Naive thymus-derived CD4-positive, alpha-beta T cell (primary cell): ENCODE measurements at regions of chr7 and their contacts with region 1.

Region 1: GRCh38 chr7:157875230-157876179 is 538.7 kb downstream of the DNAJB6 start:
- DNase-seq: peak; percentile 43 to 76 (median 72)
- ATAC-seq: peak; percentile 87
- H3K4me3 ChIP-seq: peak overlapping the region; percentile 33
- H3K4me3 Mint-ChIP-seq: peak overlapping the region; percentile 69 to 92 (median 81)
- H3K27ac ChIP-seq: peak overlapping the region; percentile 49
- H3K27ac Mint-ChIP-seq: peak overlapping the region; percentile 20 to 91 (median 73)
- H3K4me1 ChIP-seq: peaks cover 0 to 34% of the 10 kb centered on the region in 2 donors
- H3K4me1 Mint-ChIP-seq: peaks cover 14 to 47% (median 41%) of the 10 kb centered on the region in 7 donors
- H3K27me3 ChIP-seq: no peaks in the 10 kb centered on the region
- H3K27me3 Mint-ChIP-seq: peaks cover 0 to 3% (median 0%) of the 10 kb centered on the region in 5 donors

Region 2: GRCh38 chr7:157397731-157398691 is 477.5 kb before region 1 on chr7:
- CTCF ChIA-PET with region 1: no interaction called
- POLR2A ChIA-PET with region 1: no interaction called
- intact Hi-C with region 1: loop called in 1 of 2 experiments (anchors 1 kb)
- DNase-seq: peak in 2 of 9 donors; percentile 26 to 32
- ATAC-seq: peak; percentile 50
- H3K4me3 ChIP-seq: no peak overlapping the region
- H3K4me3 Mint-ChIP-seq: no peak overlapping the region
- H3K27ac ChIP-seq: no peak overlapping the region
- H3K27ac Mint-ChIP-seq: peak overlapping the region in 6 of 9 donors; percentile 9 to 73 (median 45)
- H3K4me1 ChIP-seq: no peaks in the 10 kb centered on the region
- H3K4me1 Mint-ChIP-seq: peaks cover 15 to 31% (median 20%) of the 10 kb centered on the region in 7 donors
- H3K27me3 ChIP-seq: no peaks in the 10 kb centered on the region
- H3K27me3 Mint-ChIP-seq: no peaks in the 10 kb centered on the region

Region 3: GRCh38 chr7:157490457-157490912 is 385.0 kb before region 1 on chr7:
- CTCF ChIA-PET with region 1: no interaction called
- POLR2A ChIA-PET with region 1: no interaction called
- intact Hi-C with region 1: loop called in 1 of 2 experiments (anchors 1 kb)
- DNase-seq: peak in 8 of 9 donors; percentile 48 to 83 (median 79)
- ATAC-seq: peak; percentile 96
- H3K4me3 ChIP-seq: no peak overlapping the region
- H3K4me3 Mint-ChIP-seq: peak overlapping the region; percentile 23 to 76 (median 51)
- H3K27ac ChIP-seq: no peak overlapping the region
- H3K27ac Mint-ChIP-seq: peak overlapping the region; percentile 12 to 90 (median 63)
- H3K4me1 ChIP-seq: peaks cover 18 to 21% of the 10 kb centered on the region in 2 donors
- H3K4me1 Mint-ChIP-seq: peaks cover 20 to 55% (median 41%) of the 10 kb centered on the region in 7 donors
- H3K27me3 ChIP-seq: no peaks in the 10 kb centered on the region
- H3K27me3 Mint-ChIP-seq: peaks cover 0 to 33% (median 10%) of the 10 kb centered on the region in 5 donors

Region 4: GRCh38 chr7:157625973-157626742 is 249.3 kb before region 1 on chr7:
- CTCF ChIA-PET with region 1: no interaction called
- POLR2A ChIA-PET with region 1: interaction called, 5 read pairs
- intact Hi-C with region 1: loop called in 1 of 2 experiments (anchors 1 kb)
- DNase-seq: peak in 7 of 9 donors; percentile 54 to 83 (median 80)
- ATAC-seq: peak; percentile 79
- H3K4me3 ChIP-seq: peak overlapping the region; percentile 18
- H3K4me3 Mint-ChIP-seq: peak overlapping the region; percentile 69 to 84 (median 76)
- H3K27ac ChIP-seq: no peak overlapping the region
- H3K27ac Mint-ChIP-seq: peak overlapping the region; percentile 28 to 96 (median 89)
- H3K4me1 ChIP-seq: peaks cover 15 to 71% of the 10 kb centered on the region in 2 donors
- H3K4me1 Mint-ChIP-seq: peaks cover 41 to 81% (median 77%) of the 10 kb centered on the region in 7 donors
- H3K27me3 ChIP-seq: no peaks in the 10 kb centered on the region
- H3K27me3 Mint-ChIP-seq: peaks cover 0 to 48% (median 4%) of the 10 kb centered on the region in 5 donors

Region 5: DNA sequence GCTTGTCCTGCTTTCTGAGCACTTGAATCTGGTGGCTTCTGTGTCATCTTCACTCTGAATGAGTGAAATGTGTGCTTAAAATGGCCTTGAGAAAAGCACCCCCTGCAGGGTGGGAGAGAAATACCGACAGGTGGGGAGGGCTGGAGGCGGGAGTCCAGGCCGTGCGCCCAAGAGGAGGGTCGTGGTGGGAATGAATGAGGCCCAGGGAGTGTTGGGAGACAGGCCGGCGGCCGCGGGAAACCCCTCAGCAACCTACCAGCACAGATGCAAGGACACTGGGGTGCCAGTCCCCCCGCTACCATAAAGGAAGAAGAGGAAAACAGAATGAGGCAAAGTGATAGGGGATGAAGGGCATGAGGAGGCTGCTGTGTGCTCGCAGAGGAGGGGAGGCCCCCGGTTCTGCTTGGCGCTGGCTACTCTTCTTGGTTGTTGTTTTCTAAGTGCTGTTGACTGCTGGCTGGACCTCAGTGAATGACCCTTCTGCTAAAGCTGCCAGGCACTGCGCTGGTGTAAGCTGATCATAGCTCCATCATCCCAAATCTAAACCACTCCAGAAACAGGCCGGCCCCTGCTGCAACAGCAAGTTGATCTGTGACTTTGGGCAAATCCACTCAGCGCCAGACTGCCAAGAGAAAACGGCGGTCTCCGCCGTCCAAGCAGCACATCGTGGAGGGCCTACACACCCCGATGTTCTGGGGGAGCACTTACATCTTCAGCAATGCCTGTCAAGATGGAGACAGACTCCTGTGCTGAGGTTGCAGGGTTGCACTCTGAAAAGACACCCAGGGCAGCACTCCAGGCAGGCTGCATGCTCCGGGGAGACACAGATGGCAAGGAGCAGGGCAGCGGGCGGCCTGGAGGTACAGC is 160.2 kb before region 1 on chr7:
- CTCF ChIA-PET with region 1: interaction called, 3 read pairs
- POLR2A ChIA-PET with region 1: no interaction called
- intact Hi-C with region 1: loop called in 1 of 2 experiments (anchors 5 kb)
- DNase-seq: peak in 2 of 9 donors; percentile 30
- ATAC-seq: no peak
- H3K4me3 ChIP-seq: no peak overlapping the region
- H3K4me3 Mint-ChIP-seq: no peak overlapping the region
- H3K27ac ChIP-seq: no peak overlapping the region
- H3K27ac Mint-ChIP-seq: peak overlapping the region in 2 of 9 donors; percentile 17 to 58
- H3K4me1 ChIP-seq: no peaks in the 10 kb centered on the region
- H3K4me1 Mint-ChIP-seq: no peaks in the 10 kb centered on the region
- H3K27me3 ChIP-seq: no peaks in the 10 kb centered on the region
- H3K27me3 Mint-ChIP-seq: peaks cover 0 to 8% (median 0%) of the 10 kb centered on the region in 5 donors

Region 6: DNA sequence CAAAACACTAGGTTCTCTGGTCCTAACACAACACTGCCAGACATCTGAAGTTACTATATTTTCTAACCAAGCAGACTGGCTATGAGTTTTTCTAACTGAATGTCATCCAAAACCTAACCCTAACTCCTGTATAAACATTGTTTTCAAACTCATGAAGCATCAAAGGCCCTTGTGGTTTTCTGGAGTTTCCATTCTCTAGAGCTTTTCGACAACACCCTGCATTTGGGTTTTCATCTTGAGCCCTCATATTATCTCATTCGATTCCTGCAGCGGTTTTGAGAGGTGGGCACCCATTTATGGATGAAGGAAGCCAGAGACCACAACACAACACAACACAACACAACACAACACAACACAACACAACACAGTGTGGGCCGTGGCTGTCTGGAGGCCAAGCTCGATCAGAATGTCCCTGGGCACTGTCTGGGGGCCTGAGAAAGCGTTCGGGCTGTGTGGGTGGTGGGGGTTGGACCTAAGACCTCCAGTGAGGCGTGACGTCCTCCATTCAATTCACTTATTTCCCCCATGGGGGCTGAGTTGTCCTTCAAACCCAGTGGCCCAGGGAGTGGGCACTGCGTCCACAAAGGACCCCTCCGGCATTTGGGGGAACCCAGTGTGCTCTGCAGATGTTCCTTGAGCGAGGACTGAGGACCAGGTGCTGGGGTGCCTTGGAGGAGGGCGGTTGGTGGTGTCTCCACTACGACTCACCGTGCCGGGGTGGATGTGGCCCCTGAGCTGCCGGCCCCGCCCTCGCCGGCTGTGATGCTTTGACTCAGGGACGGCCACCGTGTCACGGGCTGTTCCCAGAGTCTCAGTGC is 48.3 kb before region 1 on chr7:
- CTCF ChIA-PET with region 1: interaction called, 3 read pairs
- POLR2A ChIA-PET with region 1: interaction called, 6 read pairs
- intact Hi-C with region 1: loop called in 1 of 2 experiments (anchors 1 kb)
- DNase-seq: peak in 7 of 9 donors; percentile 53 to 79 (median 67)
- ATAC-seq: peak; percentile 74
- H3K4me3 ChIP-seq: peak overlapping the region; percentile 37
- H3K4me3 Mint-ChIP-seq: peak overlapping the region; percentile 45 to 83 (median 78)
- H3K27ac ChIP-seq: peak overlapping the region; percentile 40
- H3K27ac Mint-ChIP-seq: peak overlapping the region; percentile 66 to 96 (median 89)
- H3K4me1 ChIP-seq: peaks cover 0 to 47% of the 10 kb centered on the region in 2 donors
- H3K4me1 Mint-ChIP-seq: peaks cover 9 to 58% (median 45%) of the 10 kb centered on the region in 7 donors
- H3K27me3 ChIP-seq: no peaks in the 10 kb centered on the region
- H3K27me3 Mint-ChIP-seq: no peaks in the 10 kb centered on the region

Region 7: GRCh38 chr7:158976849-158977593 is 1101.5 kb after region 1 on chr7:
- CTCF ChIA-PET with region 1: no interaction called
- POLR2A ChIA-PET with region 1: no interaction called
- intact Hi-C with region 1: loop called in 1 of 2 experiments (anchors 10 kb)
- DNase-seq: peak; percentile 77 to 94 (median 85)
- ATAC-seq: peak; percentile 93
- H3K4me3 ChIP-seq: peak overlapping the region; percentile 55
- H3K4me3 Mint-ChIP-seq: peak overlapping the region; percentile 74 to 94 (median 88)
- H3K27ac ChIP-seq: peak overlapping the region; percentile 57
- H3K27ac Mint-ChIP-seq: peak overlapping the region; percentile 72 to 93 (median 83)
- H3K4me1 ChIP-seq: peaks cover 9 to 11% of the 10 kb centered on the region in 2 donors
- H3K4me1 Mint-ChIP-seq: peaks cover 11 to 23% (median 20%) of the 10 kb centered on the region in 7 donors
- H3K27me3 ChIP-seq: no peaks in the 10 kb centered on the region
- H3K27me3 Mint-ChIP-seq: no peaks in the 10 kb centered on the region